ENCODE measurements at regions of chr5 and their contacts with region 1.

Region 1: GRCh38 chr5:95961617-95962474 is at the start of gene ELL2:
- DNase-seq: peak; percentile 100
- H3K4me3 ChIP-seq: peak within 1 kb of the TSS; percentile 92 to 98
- H3K27ac ChIP-seq: peak within 1 kb of the TSS; percentile 99
- H3K4me1 ChIP-seq: peaks cover 0 to 14% of the 10 kb centered on the region in 2 donors
- H3K27me3 ChIP-seq: no peaks in the 10 kb centered on the region
- CTCF ChIP-seq: no peak
- total RNA-seq, gene ELL2: 26.0 TPM

Region 2: GRCh38 chr5:95858661-95859326 is 103.1 kb before region 1 on chr5:
- intact Hi-C with region 1: loop called (anchors 1 kb)
- DNase-seq: peak; percentile 91 to 99
- H3K4me3 ChIP-seq: peak overlapping the region; percentile 32 to 55
- H3K27ac ChIP-seq: peak overlapping the region; percentile 93 to 96
- H3K4me1 ChIP-seq: peaks cover 28 to 53% of the 10 kb centered on the region in 2 donors
- H3K27me3 ChIP-seq: no peaks in the 10 kb centered on the region
- CTCF ChIP-seq: peak; percentile 98 to 99 (median 99)

Region 3: GRCh38 chr5:95949810-95950209 is 12.0 kb before region 1 on chr5:
- intact Hi-C with region 1: no loop called
- DNase-seq: no peak
- H3K4me3 ChIP-seq: no peak overlapping the region
- H3K27ac ChIP-seq: no peak overlapping the region
- H3K4me1 ChIP-seq: peaks cover 0 to 36% of the 10 kb centered on the region in 2 donors
- H3K27me3 ChIP-seq: no peaks in the 10 kb centered on the region
- CTCF ChIP-seq: no peak

Region 4: GRCh38 chr5:96023518-96023917 is 61.7 kb after region 1 on chr5:
- intact Hi-C with region 1: loop called (anchors 2 kb)
- DNase-seq: no peak
- H3K4me3 ChIP-seq: peak overlapping the region in 1 of 2 donors; percentile 20
- H3K27ac ChIP-seq: peak overlapping the region in 1 of 2 donors; percentile 54
- H3K4me1 ChIP-seq: peaks cover 0 to 12% of the 10 kb centered on the region in 2 donors
- H3K27me3 ChIP-seq: no peaks in the 10 kb centered on the region
- CTCF ChIP-seq: no peak

Region 5: GRCh38 chr5:96220610-96221390 is 259.0 kb after region 1 on chr5:
- intact Hi-C with region 1: loop called (anchors 2 kb)
- DNase-seq: no peak
- H3K4me3 ChIP-seq: no peak overlapping the region
- H3K27ac ChIP-seq: peak overlapping the region; percentile 52 to 70
- H3K4me1 ChIP-seq: peaks cover 0 to 13% of the 10 kb centered on the region in 2 donors
- H3K27me3 ChIP-seq: no peaks in the 10 kb centered on the region
- CTCF ChIP-seq: no peak

Region 6: GRCh38 chr5:96336351-96336985 is 374.6 kb after region 1 on chr5:
- intact Hi-C with region 1: loop called (anchors 1 kb)
- DNase-seq: peak in 1 of 2 donors; percentile 91
- H3K4me3 ChIP-seq: no peak overlapping the region
- H3K27ac ChIP-seq: peak overlapping the region; percentile 80 to 81
- H3K4me1 ChIP-seq: peaks cover 11 to 67% of the 10 kb centered on the region in 2 donors
- H3K27me3 ChIP-seq: no peaks in the 10 kb centered on the region
- CTCF ChIP-seq: peak; percentile 84 to 86 (median 84)